Right cardiac atrium (tissue), 5 donors: ENCODE measurements at regions of chr4 and their contacts with region 1.

Region 1: DNA sequence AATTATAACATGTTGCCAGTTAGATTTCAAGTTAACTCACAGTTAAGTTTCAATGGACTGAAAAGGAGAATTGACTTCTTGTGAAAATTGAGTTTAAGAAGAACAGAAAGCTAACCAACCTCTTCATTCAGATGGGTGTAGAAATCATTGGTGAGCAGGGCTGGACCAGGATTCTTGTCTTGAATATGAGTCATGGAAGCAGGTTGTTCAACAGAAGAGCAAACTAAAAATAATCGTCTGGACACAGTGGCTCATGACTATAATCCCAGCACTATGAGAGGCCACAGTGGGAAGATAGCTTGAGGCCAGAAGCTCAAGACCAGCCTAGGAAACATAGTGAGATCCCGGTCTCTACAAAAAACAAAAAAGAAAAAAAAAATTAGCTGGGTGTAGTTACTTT is 98.2 kb downstream of the ARSJ start:
- DNase-seq: no peak
- ATAC-seq: peak in 1 of 2 donors; percentile 33
- H3K4me3 ChIP-seq: no peak overlapping the region
- H3K27ac ChIP-seq: no peak overlapping the region
- H3K4me1 ChIP-seq: no peaks in the 10 kb centered on the region
- H3K27me3 ChIP-seq: no peaks in the 10 kb centered on the region

Region 2: GRCh38 chr4:113773014-113773413 is 108.2 kb before region 1 on chr4:
- intact Hi-C with region 1: loop called in 1 of 4 experiments (anchors 10 kb)
- DNase-seq: no peak
- ATAC-seq: no peak
- H3K4me3 ChIP-seq: no peak overlapping the region
- H3K27ac ChIP-seq: no peak overlapping the region
- H3K4me1 ChIP-seq: no peaks in the 10 kb centered on the region
- H3K27me3 ChIP-seq: no peaks in the 10 kb centered on the region

Region 3: DNA sequence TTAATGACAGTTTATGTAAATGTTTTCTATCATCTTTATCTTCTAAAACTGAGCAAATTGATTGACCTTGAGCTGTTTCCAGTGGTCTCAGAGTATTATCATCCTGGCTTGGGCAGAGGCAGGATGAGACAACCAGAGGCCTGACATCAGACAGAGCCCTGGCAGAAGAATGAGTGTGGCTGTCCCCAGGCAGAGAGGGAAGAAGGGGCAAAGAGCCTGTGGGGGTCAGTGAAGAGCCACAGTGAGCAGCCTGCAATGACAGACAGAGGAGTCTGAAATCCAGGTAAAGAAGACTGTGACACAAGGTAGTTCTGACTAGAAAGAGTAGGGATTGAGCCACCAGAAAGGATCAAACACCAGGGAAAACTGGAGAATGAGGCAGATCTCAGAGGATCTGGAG is 280.6 kb after region 1 on chr4:
- intact Hi-C with region 1: no loop called
- DNase-seq: no peak
- ATAC-seq: no peak
- H3K4me3 ChIP-seq: no peak overlapping the region
- H3K27ac ChIP-seq: no peak overlapping the region
- H3K4me1 ChIP-seq: no peaks in the 10 kb centered on the region
- H3K27me3 ChIP-seq: no peaks in the 10 kb centered on the region

Region 4: DNA sequence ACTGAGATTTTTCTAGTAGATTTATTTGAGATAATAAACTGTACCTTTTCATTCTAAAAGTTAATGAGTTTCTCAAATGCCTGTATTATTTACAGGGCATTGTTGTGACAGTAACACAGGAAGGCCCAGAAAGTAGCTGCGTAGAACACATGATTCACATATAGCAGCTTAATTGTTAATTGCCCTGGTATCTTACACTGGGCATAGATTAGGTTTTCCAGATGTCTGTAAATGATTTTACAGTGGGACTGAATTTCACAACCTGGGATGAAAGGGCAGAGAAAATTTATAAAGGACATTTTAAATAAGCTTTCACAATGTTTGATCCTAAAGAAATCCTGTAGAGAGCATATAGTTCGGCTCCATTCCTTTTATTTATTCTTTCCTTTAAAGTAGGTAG is 745.0 kb after region 1 on chr4:
- intact Hi-C with region 1: no loop called
- DNase-seq: no peak
- ATAC-seq: no peak
- H3K4me3 ChIP-seq: no peak overlapping the region
- H3K27ac ChIP-seq: no peak overlapping the region
- H3K4me1 ChIP-seq: no peaks in the 10 kb centered on the region
- H3K27me3 ChIP-seq: no peaks in the 10 kb centered on the region